ENCODE measurements at regions of chr2 and their contacts with region 1.

Region 1: GRCh38 chr2:222912117-222912516 is 51.3 kb downstream of the ACSL3 start:
- DNase-seq: peak in 1 of 10 donors; percentile 23
- H3K4me3 ChIP-seq: peak overlapping the region in 22 of 59 donors; percentile 0 to 36 (median 12)
- H3K27ac ChIP-seq: peak overlapping the region in 53 of 59 donors; percentile 6 to 83 (median 63)
- H3K27me3 ChIP-seq: no peaks in the 10 kb centered on the region
- CTCF ChIP-seq: peak in 3 of 56 donors; percentile 6 to 11 (median 6)

Region 2: GRCh38 chr2:222690564-222691200 is 221.4 kb before region 1 on chr2:
- intact Hi-C with region 1: loop called in 1 of 2 experiments (anchors 5 kb)
- DNase-seq: peak; percentile 22 to 78 (median 68)
- H3K4me3 ChIP-seq: peak overlapping the region in 5 of 59 donors; percentile 4 to 27 (median 13)
- H3K27ac ChIP-seq: no peak overlapping the region
- H3K27me3 ChIP-seq: no peaks in the 10 kb centered on the region
- CTCF ChIP-seq: peak; percentile 63 to 100 (median 98)

Region 3: DNA sequence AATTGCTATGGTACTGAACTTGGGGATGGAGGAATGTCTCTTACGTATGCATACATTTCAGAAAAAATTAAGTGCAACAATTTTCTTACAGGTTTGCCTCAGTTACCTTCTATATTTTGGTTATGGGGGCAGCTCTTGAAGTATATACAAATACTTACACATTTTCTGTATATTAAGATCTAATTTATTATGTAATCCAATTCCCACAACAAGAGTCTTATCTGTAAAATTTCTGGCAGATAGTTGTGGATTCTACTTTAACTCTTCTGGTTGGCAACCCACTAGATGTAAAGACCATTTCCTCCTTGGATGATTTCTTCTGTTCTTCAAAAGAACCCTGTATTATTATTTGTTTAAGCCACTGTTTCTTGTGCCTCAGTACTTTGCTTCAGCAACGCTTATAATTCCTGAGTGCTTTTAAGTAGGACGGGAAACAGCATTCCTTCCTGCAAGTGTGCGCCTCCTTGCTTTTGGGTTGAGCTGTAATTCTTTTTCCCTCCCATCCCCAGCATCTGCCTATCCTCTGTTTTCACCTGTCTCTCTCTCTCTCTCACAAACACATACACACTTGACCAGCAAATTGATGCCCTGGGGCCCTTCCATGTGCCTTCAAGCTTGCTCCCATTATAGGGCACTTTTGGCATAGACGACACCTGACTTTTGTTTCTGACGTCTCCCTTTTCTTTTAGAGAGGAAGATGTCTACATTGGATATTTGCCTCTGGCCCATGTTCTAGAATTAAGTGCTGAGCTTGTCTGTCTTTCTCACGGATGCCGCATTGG is 10.1 kb after region 1 on chr2:
- intact Hi-C with region 1: no loop called
- DNase-seq: no peak
- H3K4me3 ChIP-seq: no peak overlapping the region
- H3K27ac ChIP-seq: no peak overlapping the region
- H3K27me3 ChIP-seq: no peaks in the 10 kb centered on the region
- CTCF ChIP-seq: no peak

Region 4: DNA sequence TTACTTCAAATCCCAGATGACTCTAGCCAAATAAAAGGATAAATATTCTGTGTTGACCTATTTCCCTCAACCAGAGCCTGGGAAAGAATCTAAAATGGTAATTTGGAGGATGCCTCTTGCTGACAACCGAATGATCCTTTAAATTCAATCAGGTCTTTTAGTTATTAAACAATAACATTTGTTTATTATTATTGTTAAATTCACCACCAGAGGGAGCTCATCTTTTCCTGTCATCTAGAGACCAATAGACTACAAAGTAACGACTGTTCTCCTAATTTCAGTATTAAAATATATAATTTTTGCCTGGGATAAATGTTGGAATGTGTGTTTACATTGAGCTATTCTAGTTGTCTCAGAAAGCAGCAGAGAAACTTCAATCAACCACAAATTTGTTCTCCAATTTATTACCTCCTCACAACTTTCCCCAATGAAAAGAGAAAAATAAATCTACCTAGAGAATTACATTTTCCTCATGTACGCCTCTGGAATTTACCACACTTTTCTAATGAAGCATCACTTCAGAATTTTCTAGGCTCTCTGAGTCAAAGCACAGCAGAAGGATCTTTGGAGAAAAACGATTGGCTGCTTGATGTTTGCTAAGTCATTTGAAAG is 547.3 kb after region 1 on chr2:
- intact Hi-C with region 1: no loop called
- DNase-seq: no peak
- H3K4me3 ChIP-seq: no peak overlapping the region
- H3K27ac ChIP-seq: no peak overlapping the region
- H3K27me3 ChIP-seq: no peaks in the 10 kb centered on the region
- CTCF ChIP-seq: peak; percentile 18 to 73 (median 49)

Measured in dorsolateral prefrontal cortex (tissue), 120 donors.